Esophagus muscularis mucosa (tissue), 4 donors: ENCODE measurements at regions of chr6 and their contacts with region 1.

Region 1: GRCh38 chr6:134174672-134175198 is 122.3 kb upstream of the SLC2A12 start:
- DNase-seq: peak; percentile 97
- H3K4me3 ChIP-seq: peak overlapping the region; percentile 66 to 92 (median 78)
- H3K27ac ChIP-seq: peak overlapping the region; percentile 86 to 98 (median 91)
- H3K4me1 ChIP-seq: peaks cover 28 to 78% (median 40%) of the 10 kb centered on the region in 4 donors
- H3K27me3 ChIP-seq: peaks cover 0 to 3% (median 2%) of the 10 kb centered on the region in 4 donors
- CTCF ChIP-seq: peak in 1 of 3 experiments; percentile 8
- EP300 ChIP-seq: no peak
- POLR2A ChIP-seq: peak; percentile 85

Region 2: GRCh38 chr6:134416418-134417154 is 241.9 kb after region 1 on chr6:
- intact Hi-C with region 1: no loop called
- DNase-seq: no peak
- H3K4me3 ChIP-seq: no peak overlapping the region
- H3K27ac ChIP-seq: no peak overlapping the region
- H3K4me1 ChIP-seq: peaks cover 0 to 17% (median 0%) of the 10 kb centered on the region in 4 donors
- H3K27me3 ChIP-seq: no peaks in the 10 kb centered on the region
- CTCF ChIP-seq: no peak
- EP300 ChIP-seq: no peak
- POLR2A ChIP-seq: no peak

Region 3: GRCh38 chr6:134640975-134641429 is 466.3 kb after region 1 on chr6:
- intact Hi-C with region 1: loop called (anchors 2 kb)
- DNase-seq: peak; percentile 94
- H3K4me3 ChIP-seq: no peak overlapping the region
- H3K27ac ChIP-seq: no peak overlapping the region
- H3K4me1 ChIP-seq: peaks cover 0 to 6% (median 3%) of the 10 kb centered on the region in 4 donors
- H3K27me3 ChIP-seq: no peaks in the 10 kb centered on the region
- CTCF ChIP-seq: peak; percentile 91 to 93 (median 92)
- EP300 ChIP-seq: no peak
- POLR2A ChIP-seq: no peak

Region 4: GRCh38 chr6:134822920-134823709 is 648.4 kb after region 1 on chr6:
- intact Hi-C with region 1: loop called (anchors 5 kb)
- DNase-seq: no peak
- H3K4me3 ChIP-seq: no peak overlapping the region
- H3K27ac ChIP-seq: no peak overlapping the region
- H3K4me1 ChIP-seq: peaks cover 0 to 23% (median 21%) of the 10 kb centered on the region in 4 donors
- H3K27me3 ChIP-seq: no peaks in the 10 kb centered on the region
- CTCF ChIP-seq: peak; percentile 76 to 83 (median 80)
- EP300 ChIP-seq: no peak
- POLR2A ChIP-seq: no peak

Region 5: GRCh38 chr6:134882426-134883038 is 707.8 kb after region 1 on chr6:
- intact Hi-C with region 1: loop called (anchors 2 kb)
- DNase-seq: no peak
- H3K4me3 ChIP-seq: no peak overlapping the region
- H3K27ac ChIP-seq: no peak overlapping the region
- H3K4me1 ChIP-seq: peaks cover 0 to 8% (median 2%) of the 10 kb centered on the region in 4 donors
- H3K27me3 ChIP-seq: peaks cover 0 to 7% (median 0%) of the 10 kb centered on the region in 4 donors
- CTCF ChIP-seq: peak; percentile 72 to 94 (median 73)
- EP300 ChIP-seq: no peak
- POLR2A ChIP-seq: no peak

Region 6: GRCh38 chr6:134938896-134939295 is 764.2 kb after region 1 on chr6:
- intact Hi-C with region 1: loop called (anchors 5 kb)
- DNase-seq: no peak
- H3K4me3 ChIP-seq: no peak overlapping the region
- H3K27ac ChIP-seq: no peak overlapping the region
- H3K4me1 ChIP-seq: peaks cover 0 to 22% (median 17%) of the 10 kb centered on the region in 4 donors
- H3K27me3 ChIP-seq: no peaks in the 10 kb centered on the region
- CTCF ChIP-seq: no peak
- EP300 ChIP-seq: no peak
- POLR2A ChIP-seq: no peak

Region 7: GRCh38 chr6:135002229-135002844 is 827.6 kb after region 1 on chr6:
- intact Hi-C with region 1: loop called (anchors 5 kb)
- DNase-seq: no peak
- H3K4me3 ChIP-seq: no peak overlapping the region
- H3K27ac ChIP-seq: no peak overlapping the region
- H3K4me1 ChIP-seq: no peaks in the 10 kb centered on the region
- H3K27me3 ChIP-seq: no peaks in the 10 kb centered on the region
- CTCF ChIP-seq: peak; percentile 18 to 54 (median 53)
- EP300 ChIP-seq: no peak
- POLR2A ChIP-seq: no peak